ENCODE measurements at regions of chr1 and their contacts with region 1.

Region 1: GRCh38 chr1:157963713-157964112 is 29.7 kb upstream of the KIRREL1 start:
- DNase-seq: peak; percentile 48
- ATAC-seq: peak; percentile 84
- H3K4me3 ChIP-seq: no peak overlapping the region
- H3K27ac ChIP-seq: no peak overlapping the region
- H3K4me1 ChIP-seq: peaks cover 16% of the 10 kb centered on the region
- H3K27me3 ChIP-seq: no peaks in the 10 kb centered on the region; a peak in 1 of 5 replicates
- CTCF ChIP-seq: peak; percentile 79
- EP300 ChIP-seq: no peak
- POLR2A ChIP-seq: no peak
- RAD21 ChIP-seq: peak; percentile 67

Region 2: GRCh38 chr1:158087320-158087927 is 123.7 kb after region 1 on chr1:
- CTCF ChIA-PET with region 1: interaction called, 8 read pairs
- POLR2A ChIA-PET with region 1: no interaction called
- in situ Hi-C with region 1: loop called (anchors 10 kb)
- intact Hi-C with region 1: no loop called
- DNase-seq: peak; percentile 80
- ATAC-seq: peak; percentile 98
- H3K4me3 ChIP-seq: no peak overlapping the region
- H3K27ac ChIP-seq: no peak overlapping the region
- H3K4me1 ChIP-seq: no peaks in the 10 kb centered on the region
- H3K27me3 ChIP-seq: no peaks in the 10 kb centered on the region
- CTCF ChIP-seq: peak; percentile 76
- EP300 ChIP-seq: no peak
- POLR2A ChIP-seq: no peak
- RAD21 ChIP-seq: peak; percentile 59

Region 3: GRCh38 chr1:158124999-158125398 is 161.3 kb after region 1 on chr1:
- CTCF ChIA-PET with region 1: interaction called, 24 read pairs
- POLR2A ChIA-PET with region 1: no interaction called
- in situ Hi-C with region 1: loop called (anchors 5 kb)
- intact Hi-C with region 1: loop called (anchors 2 kb)
- DNase-seq: peak; percentile 66
- ATAC-seq: peak; percentile 91
- H3K4me3 ChIP-seq: no peak overlapping the region
- H3K27ac ChIP-seq: no peak overlapping the region
- H3K4me1 ChIP-seq: no peaks in the 10 kb centered on the region
- H3K27me3 ChIP-seq: no peaks in the 10 kb centered on the region
- CTCF ChIP-seq: peak; percentile 83
- EP300 ChIP-seq: no peak
- POLR2A ChIP-seq: no peak
- RAD21 ChIP-seq: peak; percentile 68

Region 4: GRCh38 chr1:158998781-158999161 is 1035.1 kb after region 1 on chr1:
- CTCF ChIA-PET with region 1: no interaction called
- POLR2A ChIA-PET with region 1: no interaction called
- in situ Hi-C with region 1: no loop called
- intact Hi-C with region 1: loop called (anchors 10 kb)
- DNase-seq: peak; percentile 40
- ATAC-seq: peak; percentile 39; the same call in 1 of the 3 replicates
- H3K4me3 ChIP-seq: no peak overlapping the region
- H3K27ac ChIP-seq: no peak overlapping the region
- H3K4me1 ChIP-seq: no peaks in the 10 kb centered on the region
- H3K27me3 ChIP-seq: no peaks in the 10 kb centered on the region
- CTCF ChIP-seq: peak; percentile 72
- EP300 ChIP-seq: no peak
- POLR2A ChIP-seq: no peak
- RAD21 ChIP-seq: 0 out of 2 replicates have a peak, but pooled peaks have one; percentile 22

Region 5: DNA sequence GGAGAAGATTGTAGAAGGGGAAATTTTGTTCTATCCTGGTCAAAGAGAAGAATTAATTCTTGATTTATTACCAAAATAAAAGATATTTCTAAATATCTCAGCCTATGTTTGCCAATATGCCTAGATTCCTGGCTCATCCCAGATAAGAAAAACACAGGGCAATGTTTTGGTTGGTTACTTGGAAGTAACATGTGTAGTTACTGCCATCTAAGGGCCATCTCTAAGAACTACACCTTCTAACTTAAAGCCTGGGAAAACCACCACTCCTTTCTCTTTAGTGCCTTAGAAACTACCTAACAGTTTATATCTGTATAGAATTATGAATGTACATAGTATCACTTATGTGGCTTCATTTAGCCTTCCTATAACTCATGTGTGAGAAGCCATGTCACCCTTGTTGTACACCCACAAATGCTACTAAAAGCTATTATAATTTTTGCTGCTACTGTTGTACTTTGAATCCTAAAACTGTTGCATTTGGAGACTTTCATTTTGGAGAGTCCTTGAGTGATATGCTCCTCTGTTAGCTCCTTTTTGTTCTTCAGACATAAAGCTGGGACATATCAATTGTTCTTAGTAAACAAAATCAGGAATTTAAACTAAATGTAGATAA is 1108.4 kb after region 1 on chr1:
- CTCF ChIA-PET with region 1: no interaction called
- POLR2A ChIA-PET with region 1: no interaction called
- in situ Hi-C with region 1: no loop called
- intact Hi-C with region 1: loop called (anchors 5 kb)
- DNase-seq: peak; percentile 38
- ATAC-seq: peak; percentile 65
- H3K4me3 ChIP-seq: no peak overlapping the region
- H3K27ac ChIP-seq: no peak overlapping the region
- H3K4me1 ChIP-seq: no peaks in the 10 kb centered on the region
- H3K27me3 ChIP-seq: no peaks in the 10 kb centered on the region
- CTCF ChIP-seq: peak; percentile 63
- EP300 ChIP-seq: no peak
- POLR2A ChIP-seq: no peak
- RAD21 ChIP-seq: no peak